Stomach (tissue), 19 donors: ENCODE measurements at regions of chr2 and their contacts with region 1.

Region 1: DNA sequence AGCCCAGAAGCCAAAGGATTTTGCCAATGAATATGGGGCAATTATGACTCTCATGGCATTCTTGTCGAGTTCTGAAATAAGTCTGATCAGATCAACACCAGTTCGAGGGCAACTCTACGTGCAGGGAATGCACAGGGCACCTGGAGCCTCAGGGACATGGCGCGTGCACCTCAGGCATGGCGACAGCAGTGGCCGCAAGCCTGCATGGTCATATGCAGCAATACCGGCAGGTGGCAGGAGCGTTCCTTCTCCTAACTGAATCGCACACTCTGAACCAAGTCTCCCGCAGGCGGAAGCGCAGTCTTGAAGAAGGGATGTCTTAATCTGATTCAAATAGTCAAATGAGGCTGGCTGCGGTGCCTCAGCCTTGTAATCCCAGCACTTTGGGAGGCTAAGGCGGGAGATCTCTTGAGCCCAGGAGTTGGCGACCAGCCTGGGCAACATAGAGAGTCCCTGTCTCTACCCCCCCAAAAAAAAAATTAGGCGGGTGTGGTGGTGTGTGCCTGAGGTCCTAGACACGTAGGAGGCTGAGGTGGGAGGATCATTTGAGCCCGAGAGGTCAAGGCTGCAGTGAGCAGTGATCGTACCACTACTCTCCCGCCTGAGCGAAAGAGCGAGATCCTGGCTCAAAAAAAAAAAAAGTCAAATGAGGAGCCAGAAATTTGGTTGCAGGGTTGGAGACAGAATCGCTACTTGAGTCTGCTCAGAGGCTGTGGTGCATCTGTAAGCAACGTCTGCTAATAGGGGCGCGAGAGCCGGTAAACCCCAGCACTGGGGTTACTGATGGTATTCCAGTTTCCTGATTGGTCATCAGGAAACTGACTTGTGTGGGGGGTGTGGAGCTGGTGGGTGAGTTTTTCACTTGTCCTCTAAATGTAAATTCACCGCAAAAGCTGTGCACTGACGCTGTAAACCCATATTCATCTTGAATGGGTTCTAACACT is 28.8 kb downstream of the FHL2 start:
- DNase-seq: peak; percentile 93 to 96
- H3K4me3 ChIP-seq: no peak overlapping the region
- H3K27ac ChIP-seq: peak overlapping the region in 4 of 5 donors; percentile 41 to 93 (median 86)
- H3K4me1 ChIP-seq: peaks cover 32 to 74% (median 61%) of the 10 kb centered on the region in 4 donors
- H3K27me3 ChIP-seq: no peaks in the 10 kb centered on the region
- CTCF ChIP-seq: peak in 6 of 7 experiments; percentile 72 to 96 (median 90)
- EP300 ChIP-seq: no peak
- POLR2A ChIP-seq: no peak

Region 2: DNA sequence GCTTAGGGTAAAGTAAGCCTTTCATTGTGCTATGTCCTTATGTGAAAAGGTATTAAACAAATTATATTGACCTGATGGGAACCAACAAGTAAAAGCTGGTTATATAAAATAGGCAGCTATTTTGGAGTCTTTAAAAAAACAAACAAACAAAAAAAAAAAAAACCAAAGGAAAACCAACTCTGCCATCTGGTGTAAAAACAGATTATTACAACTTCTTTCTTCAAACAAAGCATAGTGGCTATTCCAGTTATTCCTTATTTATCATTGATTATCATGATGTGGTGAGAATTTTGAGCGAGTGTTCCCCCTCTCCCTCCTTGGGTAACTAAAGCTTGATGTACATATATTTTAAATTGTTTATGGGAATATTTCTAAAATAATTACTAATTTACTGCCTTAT is 151.2 kb after region 1 on chr2:
- intact Hi-C with region 1: loop called (anchors 5 kb)
- DNase-seq: peak in 1 of 2 donors; percentile 41
- H3K4me3 ChIP-seq: no peak overlapping the region
- H3K27ac ChIP-seq: no peak overlapping the region
- H3K4me1 ChIP-seq: peaks cover 13 to 30% (median 25%) of the 10 kb centered on the region in 4 donors
- H3K27me3 ChIP-seq: no peaks in the 10 kb centered on the region
- CTCF ChIP-seq: peak in 5 of 7 experiments; percentile 24 to 74 (median 44)
- EP300 ChIP-seq: no peak
- POLR2A ChIP-seq: no peak